ENCODE measurements at regions of chr12 and their contacts with region 1.

Region 1: GRCh38 chr12:132003846-132004245 is 54.1 kb downstream of the EP400 start:
- DNase-seq: no peak
- H3K4me3 Mint-ChIP-seq: no peak overlapping the region
- H3K27ac Mint-ChIP-seq: no peak overlapping the region
- H3K4me1 Mint-ChIP-seq: peaks cover 8% of the 10 kb centered on the region
- H3K27me3 Mint-ChIP-seq: no peaks in the 10 kb centered on the region
- CTCF ChIP-seq: no peak

Region 2: GRCh38 chr12:131836193-131836592 is 167.7 kb before region 1 on chr12:
- CTCF ChIA-PET with region 1: no interaction called
- intact Hi-C with region 1: loop called (anchors 5 kb)
- DNase-seq: no peak
- H3K4me3 Mint-ChIP-seq: no peak overlapping the region
- H3K27ac Mint-ChIP-seq: no peak overlapping the region
- H3K4me1 Mint-ChIP-seq: peaks cover 23% of the 10 kb centered on the region
- H3K27me3 Mint-ChIP-seq: peaks cover 48% of the 10 kb centered on the region
- CTCF ChIP-seq: peak; percentile 60

Region 3: DNA sequence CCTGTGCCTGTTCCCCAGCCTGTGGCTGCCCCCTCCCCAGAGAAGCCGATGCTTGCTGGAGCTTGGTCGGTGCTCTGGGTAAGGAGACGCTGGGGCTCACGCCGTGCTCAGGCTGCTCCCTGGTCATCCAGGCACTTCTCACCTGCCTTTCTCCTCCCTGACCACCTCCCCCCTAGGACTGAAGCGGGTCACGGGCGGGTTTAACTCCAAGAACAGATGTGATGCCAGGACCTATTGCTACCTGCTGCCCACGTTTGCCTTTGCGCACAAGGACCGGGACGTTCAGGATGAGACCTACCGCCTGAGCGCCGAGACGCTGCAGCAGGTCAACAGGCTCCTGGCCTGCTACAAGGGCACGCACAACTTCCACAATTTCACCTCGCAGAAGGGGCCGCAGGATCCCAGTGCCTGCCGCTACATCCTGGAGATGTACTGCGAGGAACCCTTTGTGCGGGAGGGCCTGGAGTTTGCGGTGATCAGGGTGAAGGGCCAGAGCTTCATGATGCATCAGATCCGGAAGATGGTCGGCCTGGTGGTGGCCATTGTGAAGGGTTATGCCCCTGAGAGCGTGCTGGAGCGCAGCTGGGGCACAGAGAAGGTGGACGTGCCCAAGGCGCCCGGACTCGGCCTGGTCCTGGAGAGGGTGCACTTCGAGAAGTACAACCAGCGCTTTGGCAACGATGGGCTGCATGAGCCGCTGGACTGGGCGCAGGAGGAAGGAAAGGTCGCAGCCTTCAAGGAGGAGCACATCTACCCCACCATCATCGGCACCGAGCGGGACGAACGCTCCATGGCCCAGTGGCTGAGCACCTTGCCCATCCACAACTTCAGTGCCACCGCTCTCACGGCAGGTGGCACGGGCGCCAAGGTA is 62.5 kb before region 1 on chr12:
- CTCF ChIA-PET with region 1: no interaction called
- intact Hi-C with region 1: no loop called
- DNase-seq: no peak
- H3K4me3 Mint-ChIP-seq: no peak overlapping the region
- H3K27ac Mint-ChIP-seq: no peak overlapping the region
- H3K4me1 Mint-ChIP-seq: no peaks in the 10 kb centered on the region
- H3K27me3 Mint-ChIP-seq: no peaks in the 10 kb centered on the region
- CTCF ChIP-seq: no peak

Region 4: GRCh38 chr12:131959641-131960589 is 43.9 kb before region 1 on chr12:
- CTCF ChIA-PET with region 1: no interaction called
- intact Hi-C with region 1: no loop called
- DNase-seq: no peak
- H3K4me3 Mint-ChIP-seq: no peak overlapping the region
- H3K27ac Mint-ChIP-seq: no peak overlapping the region
- H3K4me1 Mint-ChIP-seq: peaks cover 40% of the 10 kb centered on the region
- H3K27me3 Mint-ChIP-seq: no peaks in the 10 kb centered on the region
- CTCF ChIP-seq: no peak

Region 5: DNA sequence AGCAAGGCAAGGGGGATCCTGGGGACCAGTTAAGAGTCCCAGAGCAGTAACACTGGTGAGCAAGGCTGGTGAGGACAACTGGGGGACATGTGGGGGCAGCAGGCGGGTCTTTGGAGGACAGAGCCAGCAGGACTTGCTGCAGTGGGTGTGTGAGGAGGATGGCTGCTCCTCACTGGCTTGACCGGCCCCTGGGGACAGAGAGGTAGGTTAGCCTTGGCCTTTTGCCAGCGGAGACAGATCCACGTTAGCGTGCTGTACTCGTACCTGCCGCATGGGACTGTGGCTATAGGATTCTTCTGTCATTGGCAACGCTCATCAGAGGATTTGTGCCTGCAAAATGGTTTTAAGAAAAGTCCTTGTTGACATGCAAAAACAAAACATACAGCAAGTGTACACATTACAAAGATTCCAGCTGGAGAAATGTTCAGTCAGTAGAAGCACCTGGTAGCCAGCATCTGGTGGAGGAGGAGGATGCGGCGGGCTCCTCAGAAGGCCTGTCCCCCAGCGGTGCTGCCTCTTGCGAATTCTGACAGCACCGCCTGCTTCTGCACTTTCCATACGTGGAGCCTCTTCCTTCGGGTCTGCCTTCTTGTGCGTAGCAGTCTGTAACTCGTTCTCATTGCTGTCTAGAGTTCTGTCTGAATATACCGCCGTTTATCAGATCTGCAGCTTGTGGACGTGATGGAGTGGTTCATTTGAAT is 37.2 kb after region 1 on chr12:
- CTCF ChIA-PET with region 1: no interaction called
- intact Hi-C with region 1: no loop called
- DNase-seq: no peak
- H3K4me3 Mint-ChIP-seq: no peak overlapping the region
- H3K27ac Mint-ChIP-seq: no peak overlapping the region
- H3K4me1 Mint-ChIP-seq: no peaks in the 10 kb centered on the region
- H3K27me3 Mint-ChIP-seq: no peaks in the 10 kb centered on the region
- CTCF ChIP-seq: no peak

Region 6: DNA sequence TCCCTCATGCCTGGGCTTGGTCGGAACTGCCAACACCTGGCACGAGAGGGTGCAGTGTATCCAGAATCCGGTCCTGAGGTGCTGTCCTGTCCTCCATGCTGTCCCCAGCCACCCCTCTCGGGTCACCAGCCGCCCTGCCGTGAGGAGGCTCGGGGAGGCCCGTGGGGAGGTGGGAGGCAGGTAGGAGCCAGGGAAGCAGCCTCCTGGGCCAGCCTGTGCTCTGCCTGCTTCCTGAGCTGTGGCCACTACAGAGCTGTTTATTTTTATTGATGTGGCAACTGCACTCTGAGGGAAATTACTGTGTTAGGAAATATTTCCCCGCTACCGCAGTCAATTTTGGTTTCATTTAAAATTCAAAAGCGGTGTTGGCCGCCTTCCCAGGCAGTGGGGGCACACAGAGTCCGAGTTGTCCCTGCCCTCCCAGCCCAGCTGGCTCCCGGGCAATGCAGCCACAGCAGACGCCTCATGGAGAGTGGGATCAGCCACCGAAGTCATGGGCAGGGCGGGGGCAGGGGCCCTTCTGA is 158.7 kb after region 1 on chr12:
- CTCF ChIA-PET with region 1: no interaction called
- intact Hi-C with region 1: no loop called
- DNase-seq: peak; percentile 50
- H3K4me3 Mint-ChIP-seq: no peak overlapping the region
- H3K27ac Mint-ChIP-seq: no peak overlapping the region
- H3K4me1 Mint-ChIP-seq: peaks cover 16% of the 10 kb centered on the region
- H3K27me3 Mint-ChIP-seq: peaks cover 69% of the 10 kb centered on the region
- CTCF ChIP-seq: no peak

Measured in Calu3 (cell line).